BJ (cell line): ENCODE measurements at regions of chr11 and their contacts with region 1.

Region 1: GRCh38 chr11:396948-397548 is 3.0 kb downstream of the PKP3 start:
- DNase-seq: no peak
- H3K4me3 ChIP-seq: peak overlapping the region; percentile 38
- H3K27me3 ChIP-seq: no peaks in the 10 kb centered on the region
- CTCF ChIP-seq: peak; percentile 75

Region 2: DNA sequence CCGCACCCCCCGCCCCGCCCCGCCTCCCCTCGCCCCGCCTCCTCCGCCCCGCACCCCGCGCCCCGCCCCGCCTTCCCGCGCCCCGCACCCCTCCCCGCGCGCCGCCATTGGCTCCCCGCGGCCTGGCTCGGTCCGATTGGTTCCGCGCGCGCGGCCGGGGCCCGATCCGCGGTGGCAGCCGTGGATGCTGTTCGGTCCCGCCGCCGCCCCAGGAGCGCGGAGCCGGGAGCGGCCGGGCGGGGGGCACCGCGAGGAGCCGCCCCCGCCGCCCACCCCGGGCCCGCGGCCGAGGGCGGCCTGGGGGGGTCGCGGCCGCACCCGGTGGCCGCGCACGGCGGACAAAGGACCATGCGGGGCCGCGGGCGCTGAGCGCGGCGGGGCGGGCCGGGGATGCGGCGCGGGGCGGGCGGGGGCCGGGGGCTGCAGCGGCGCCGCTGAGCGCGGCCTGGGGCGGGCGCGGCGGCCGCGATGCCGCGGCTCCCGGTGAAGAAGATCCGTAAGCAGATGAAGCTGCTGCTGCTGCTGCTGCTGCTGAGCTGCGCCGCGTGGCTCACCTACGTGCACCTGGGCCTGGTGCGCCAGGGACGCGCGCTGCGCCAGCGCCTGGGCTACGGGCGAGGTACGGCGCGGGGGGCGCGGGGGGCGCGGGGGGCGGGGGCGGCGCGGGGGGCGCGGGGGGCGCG is 27.6 kb before region 1 on chr11 and contains the start of gene B4GALNT4:
- CTCF ChIA-PET with region 1: interaction called, 10 read pairs
- POLR2A ChIA-PET with region 1: no interaction called
- DNase-seq: no peak
- H3K4me3 ChIP-seq: peak within 1 kb of the TSS; percentile 39
- H3K27me3 ChIP-seq: peaks cover 26% of the 10 kb centered on the region
- CTCF ChIP-seq: no peak
- polyA plus RNA-seq, gene B4GALNT4: 3.0 and 5.4 TPM in 2 replicates

Region 3: DNA sequence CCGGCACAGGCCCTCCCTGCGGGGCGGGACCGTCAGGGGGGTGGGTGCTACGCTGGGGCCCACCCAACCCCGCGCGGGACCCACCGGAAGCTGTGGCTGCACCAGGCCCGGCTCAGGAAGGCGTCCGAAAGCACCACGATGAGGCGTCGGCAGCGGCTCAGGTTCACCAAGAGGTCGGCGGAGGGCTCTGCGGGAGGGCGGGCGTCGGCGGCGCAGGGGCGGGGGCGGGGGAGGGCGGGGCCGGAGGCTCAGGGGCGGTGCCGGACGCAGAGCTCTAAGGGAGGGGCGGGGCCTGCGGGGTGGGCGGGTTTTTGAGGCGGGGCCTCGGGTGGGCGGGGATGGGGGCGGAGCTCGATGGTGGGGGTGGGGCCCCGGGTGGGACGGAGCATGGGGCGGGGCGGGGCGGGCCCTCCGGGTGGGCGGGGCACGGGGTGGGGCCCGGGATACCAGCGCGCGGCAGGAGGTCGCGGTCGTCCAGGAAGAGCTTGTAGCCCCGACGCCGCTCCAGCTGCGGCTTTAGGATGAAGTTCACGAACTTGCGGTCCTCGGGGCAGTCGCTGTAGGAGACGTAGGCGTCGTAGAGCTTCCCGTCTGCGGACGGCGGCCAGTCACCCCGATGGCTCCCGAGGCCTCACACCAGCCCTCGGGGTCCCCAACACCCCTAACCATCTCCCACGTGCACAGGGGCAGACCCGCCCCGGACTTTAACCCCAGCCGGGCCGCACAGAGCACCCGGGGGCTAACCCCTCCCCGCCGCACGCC is 10.1 kb after region 1 on chr11:
- CTCF ChIA-PET with region 1: interaction called, 11 read pairs
- POLR2A ChIA-PET with region 1: no interaction called
- DNase-seq: no peak
- H3K4me3 ChIP-seq: peak overlapping the region; percentile 53
- H3K27me3 ChIP-seq: no peaks in the 10 kb centered on the region
- CTCF ChIP-seq: no peak

Region 4: DNA sequence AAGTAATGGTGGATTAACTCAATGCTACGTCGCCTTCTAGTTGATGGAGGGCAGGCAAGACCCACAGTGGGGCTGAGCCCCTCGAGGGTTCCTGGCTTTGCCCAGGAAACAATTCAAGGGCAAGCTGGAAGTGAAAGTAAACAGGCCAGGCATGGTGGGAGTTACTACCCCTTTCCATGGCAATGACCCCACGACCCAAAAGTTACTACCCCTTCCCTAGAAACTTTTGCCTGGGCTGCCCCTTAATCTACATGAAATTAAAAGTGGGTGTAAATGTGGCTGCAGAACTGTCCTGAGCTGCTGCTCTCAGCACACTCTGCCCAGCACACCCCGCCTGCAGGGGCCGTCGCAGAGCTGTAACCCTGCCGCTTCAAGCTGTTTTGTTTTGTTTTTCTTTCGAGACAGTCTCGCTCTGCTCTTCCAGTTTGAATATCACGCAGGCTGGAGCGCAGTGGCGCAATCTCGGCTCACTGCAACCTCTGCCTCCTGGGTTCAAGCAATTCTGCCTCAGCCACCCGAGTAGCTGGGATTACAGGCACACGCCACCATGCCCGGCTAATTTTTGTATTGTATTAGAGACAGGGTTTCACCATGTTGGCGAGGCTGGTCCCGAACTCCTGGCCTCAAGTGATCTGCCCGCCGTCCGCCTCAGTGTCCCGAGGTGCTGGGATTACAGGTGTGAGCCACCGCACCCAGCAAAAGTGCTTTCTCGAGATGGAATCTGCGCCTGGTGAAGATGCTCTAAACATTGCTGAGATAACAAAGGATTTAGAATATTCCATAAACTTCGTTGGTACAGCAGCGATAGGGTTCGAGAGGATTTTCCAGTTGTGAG is 115.9 kb after region 1 on chr11:
- CTCF ChIA-PET with region 1: no interaction called
- POLR2A ChIA-PET with region 1: no interaction called
- DNase-seq: no peak
- H3K4me3 ChIP-seq: no peak overlapping the region
- H3K27me3 ChIP-seq: no peaks in the 10 kb centered on the region
- CTCF ChIP-seq: no peak